PC-9 (cell line): ENCODE measurements at regions of chr12 and their contacts with region 1.

Region 1: DNA sequence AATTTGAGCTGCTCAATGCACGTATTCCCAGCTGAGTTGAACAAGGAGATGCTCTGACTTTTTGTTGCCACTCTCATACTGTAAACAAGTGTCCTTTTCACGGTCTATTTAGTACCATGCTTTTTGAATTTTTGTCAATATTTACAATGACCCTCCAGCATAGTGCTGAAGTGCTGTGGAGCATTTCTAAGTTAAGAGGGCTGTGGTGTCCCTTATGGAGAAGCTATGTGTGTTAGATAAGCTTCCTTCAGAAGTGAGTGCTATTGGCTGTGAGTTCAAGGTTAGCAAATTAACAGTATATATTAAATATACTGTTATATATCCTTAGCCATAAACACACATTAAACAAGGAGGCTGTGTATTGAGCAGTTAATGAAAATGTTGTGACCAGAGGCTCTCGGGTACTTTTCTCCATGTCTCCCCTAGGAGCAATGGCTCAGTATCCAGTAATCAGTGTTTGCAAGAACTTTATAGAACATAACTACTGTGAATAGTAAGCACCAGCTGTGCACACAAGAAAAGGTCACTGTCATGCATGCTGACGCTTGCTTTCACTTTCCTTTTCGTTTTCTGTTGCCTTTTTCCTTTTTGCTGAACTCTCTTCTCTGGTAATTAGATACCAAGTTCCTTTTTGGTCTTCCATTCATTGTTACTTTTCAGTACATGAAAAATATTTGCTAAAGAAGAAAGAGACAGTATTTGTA is 187.2 kb upstream of the NEDD1 start:
- DNase-seq: no peak
- H3K4me3 ChIP-seq: peak overlapping the region; percentile 42; the same call in 1 of the 2 replicates
- H3K27ac ChIP-seq: no peak overlapping the region
- H3K4me1 ChIP-seq: no peaks in the 10 kb centered on the region
- H3K27me3 ChIP-seq: no peaks in the 10 kb centered on the region
- CTCF ChIP-seq: no peak

Region 2: DNA sequence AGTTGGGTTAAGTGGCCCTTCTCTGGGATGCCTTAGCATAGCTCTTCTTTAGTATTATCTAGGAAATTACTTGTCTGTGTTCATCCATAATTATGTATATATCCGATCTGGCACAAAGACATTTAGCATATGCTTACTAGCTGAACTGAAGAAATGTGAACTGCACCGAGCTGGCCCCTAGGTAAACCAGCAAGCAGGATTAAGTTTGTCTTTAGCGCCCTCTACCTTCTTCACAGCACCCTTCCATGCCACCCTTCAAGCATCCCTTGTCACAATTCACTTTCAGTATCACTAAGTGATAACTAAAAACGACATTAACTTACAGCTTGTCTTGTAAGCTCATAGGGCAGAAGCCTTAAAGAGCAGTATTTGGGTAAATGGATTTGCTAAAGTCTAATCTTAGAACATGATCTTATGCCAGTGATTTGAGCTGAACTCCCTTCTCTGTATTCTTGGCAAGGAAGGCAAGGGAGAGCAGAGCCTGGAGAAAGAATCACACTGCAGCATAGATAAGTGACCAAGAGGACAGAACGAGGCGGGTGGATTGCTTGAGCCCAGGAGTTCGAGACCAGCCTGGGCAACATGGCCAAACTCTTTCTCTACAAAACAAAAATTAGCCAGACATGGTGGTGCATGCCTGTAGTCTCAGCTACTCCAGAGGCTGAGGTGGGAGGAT is 721.1 kb before region 1 on chr12:
- CTCF ChIA-PET with region 1: no interaction called
- POLR2A ChIA-PET with region 1: no interaction called
- intact Hi-C with region 1: no loop called
- DNase-seq: no peak
- H3K4me3 ChIP-seq: no peak overlapping the region
- H3K27ac ChIP-seq: peak overlapping the region; percentile 37
- H3K4me1 ChIP-seq: peaks cover 39% of the 10 kb centered on the region
- H3K27me3 ChIP-seq: no peaks in the 10 kb centered on the region
- CTCF ChIP-seq: peak; percentile 75

Region 3: GRCh38 chr12:96108321-96108720 is 611.5 kb before region 1 on chr12:
- CTCF ChIA-PET with region 1: no interaction called
- POLR2A ChIA-PET with region 1: no interaction called
- intact Hi-C with region 1: no loop called
- DNase-seq: peak in 1 of 2 experiments; percentile 7
- H3K4me3 ChIP-seq: no peak overlapping the region
- H3K27ac ChIP-seq: 0 out of 2 replicates have a peak overlapping the region, but pooled peaks have one; percentile 30
- H3K4me1 ChIP-seq: peaks cover 10% of the 10 kb centered on the region
- H3K27me3 ChIP-seq: no peaks in the 10 kb centered on the region
- CTCF ChIP-seq: no peak

Region 4: DNA sequence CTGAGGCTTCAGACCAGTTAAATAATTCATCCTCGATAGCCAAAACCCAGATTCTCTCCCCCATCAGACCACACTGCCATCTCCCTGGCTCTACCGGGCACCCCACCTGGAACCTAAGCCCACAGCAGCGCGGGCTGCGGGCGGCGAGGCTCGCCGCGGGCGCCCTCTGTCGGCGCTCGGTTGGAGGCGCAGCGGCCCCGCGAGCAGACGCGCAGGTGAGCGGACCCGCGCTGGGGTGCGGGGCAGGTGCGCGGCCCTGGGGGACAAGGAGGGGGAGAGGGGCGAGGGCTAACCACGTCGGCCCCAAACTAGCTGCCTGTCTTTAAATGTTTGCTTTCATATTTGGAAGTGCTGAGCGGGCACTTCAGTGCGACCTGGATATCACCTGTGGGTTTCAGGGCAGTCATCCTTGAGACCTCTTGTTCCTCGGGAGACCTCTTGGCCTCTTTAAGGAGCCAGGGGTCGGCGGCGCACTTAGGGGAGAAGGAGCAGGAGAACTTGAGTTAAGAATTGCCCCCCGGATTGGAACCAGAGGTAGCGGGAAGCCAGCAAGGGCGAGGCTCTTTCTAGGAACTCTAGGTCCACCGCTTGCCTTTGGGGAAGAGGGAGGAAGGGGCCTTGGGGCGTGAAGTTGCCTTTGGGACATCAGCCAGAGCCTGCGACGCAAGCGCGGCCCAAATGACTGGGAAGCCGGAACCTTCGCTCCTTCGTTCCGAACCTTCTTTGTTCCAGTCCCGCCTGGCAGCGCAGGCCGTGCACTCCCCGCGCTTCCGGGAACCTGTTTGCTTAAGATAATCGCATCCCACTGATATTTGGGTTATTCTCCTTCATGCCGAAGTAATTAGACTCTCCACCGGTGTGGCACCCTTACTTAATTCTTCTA is 265.9 kb after region 1 on chr12:
- CTCF ChIA-PET with region 1: no interaction called
- POLR2A ChIA-PET with region 1: no interaction called
- intact Hi-C with region 1: loop called (anchors 10 kb)
- DNase-seq: peak in 1 of 2 experiments; percentile 32
- H3K4me3 ChIP-seq: no peak overlapping the region; the same call in 1 of the 2 replicates
- H3K27ac ChIP-seq: no peak overlapping the region
- H3K4me1 ChIP-seq: no peaks in the 10 kb centered on the region
- H3K27me3 ChIP-seq: peaks cover 13% of the 10 kb centered on the region; the same call in 1 of the 2 replicates
- CTCF ChIP-seq: peak; percentile 68

Region 5: DNA sequence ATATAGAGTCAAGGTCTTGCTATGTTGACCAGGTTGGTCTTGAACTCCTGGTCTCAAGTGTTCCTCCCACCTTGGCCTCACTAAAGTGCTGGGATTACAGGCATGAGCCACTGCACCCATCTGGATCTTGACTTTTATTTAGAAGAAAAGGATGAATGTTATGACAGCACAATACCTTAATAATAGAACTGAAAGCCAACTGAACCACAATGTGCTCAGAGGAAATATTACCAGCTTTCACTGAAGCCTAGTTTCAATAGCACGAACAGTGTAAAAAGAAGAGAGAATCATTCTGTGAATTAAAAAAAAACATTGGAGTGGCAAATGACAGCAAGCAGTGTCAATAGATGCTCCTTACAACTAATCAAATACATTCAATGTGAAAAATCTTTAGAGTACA is 503.6 kb after region 1 on chr12:
- CTCF ChIA-PET with region 1: no interaction called
- POLR2A ChIA-PET with region 1: no interaction called
- intact Hi-C with region 1: no loop called
- DNase-seq: no peak
- H3K4me3 ChIP-seq: no peak overlapping the region
- H3K27ac ChIP-seq: no peak overlapping the region
- H3K4me1 ChIP-seq: no peaks in the 10 kb centered on the region
- H3K27me3 ChIP-seq: no peaks in the 10 kb centered on the region
- CTCF ChIP-seq: no peak